ENCODE measurements at regions of chr16 and their contacts with region 1.

Region 1: DNA sequence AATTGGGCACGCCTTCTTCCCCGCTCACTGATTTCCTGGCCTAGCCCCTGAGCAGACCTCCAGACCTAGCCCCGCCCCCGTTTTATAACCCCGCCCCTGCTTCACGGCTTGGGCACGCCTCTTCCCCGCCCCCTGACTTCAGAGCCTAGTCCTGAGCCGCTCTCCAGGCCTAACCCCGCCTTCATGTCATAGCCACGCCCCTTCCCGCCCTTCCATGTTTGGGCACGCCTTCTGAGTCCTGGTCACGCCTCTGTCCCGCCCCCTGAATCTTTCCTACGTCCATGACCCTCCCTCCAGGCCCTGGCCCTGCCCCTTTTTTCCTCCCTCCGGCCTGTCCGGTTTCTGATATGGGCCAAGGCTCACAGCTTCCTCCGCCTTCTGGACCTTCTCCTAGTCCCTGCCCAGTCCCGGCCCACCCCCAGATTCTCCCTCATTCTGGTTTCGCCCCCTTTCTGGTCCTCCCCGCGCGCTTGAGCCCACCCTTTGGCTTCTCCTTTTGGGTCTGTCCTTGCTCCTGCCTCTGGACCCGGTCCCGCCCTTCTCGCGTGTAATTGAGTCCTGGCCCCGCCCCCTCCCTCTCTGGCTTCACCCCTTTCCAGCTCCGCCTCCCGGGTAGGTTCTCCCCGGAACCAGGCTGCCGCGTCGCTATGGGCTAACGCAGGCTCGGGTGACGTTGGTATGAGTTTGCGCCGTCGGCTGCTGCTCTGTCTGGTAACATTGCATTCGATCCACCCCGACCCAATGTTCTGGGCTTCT is 15.1 kb upstream of the EEF2K start:
- DNase-seq: peak; percentile 100
- H3K4me3 ChIP-seq: no peak overlapping the region
- CTCF ChIP-seq: no peak
- POLR2A ChIP-seq: peak in 1 of 2 donors; percentile 38

Region 2: GRCh38 chr16:20900299-20901067 is 1290.5 kb before region 1 on chr16 and contains the starts of genes DCUN1D3 and LYRM1:
- intact Hi-C with region 1: loop called (anchors 10 kb)
- DNase-seq: peak; percentile 96 to 99
- H3K4me3 ChIP-seq: peak within 1 kb of the TSS; percentile 55
- CTCF ChIP-seq: no peak
- POLR2A ChIP-seq: peak in 1 of 2 donors; percentile 58
- total RNA-seq, gene DCUN1D3: 18.2 to 20.8 (median 18.3) TPM
- total RNA-seq, gene LYRM1: 24.3 to 27.3 (median 25.5) TPM

Region 3: DNA sequence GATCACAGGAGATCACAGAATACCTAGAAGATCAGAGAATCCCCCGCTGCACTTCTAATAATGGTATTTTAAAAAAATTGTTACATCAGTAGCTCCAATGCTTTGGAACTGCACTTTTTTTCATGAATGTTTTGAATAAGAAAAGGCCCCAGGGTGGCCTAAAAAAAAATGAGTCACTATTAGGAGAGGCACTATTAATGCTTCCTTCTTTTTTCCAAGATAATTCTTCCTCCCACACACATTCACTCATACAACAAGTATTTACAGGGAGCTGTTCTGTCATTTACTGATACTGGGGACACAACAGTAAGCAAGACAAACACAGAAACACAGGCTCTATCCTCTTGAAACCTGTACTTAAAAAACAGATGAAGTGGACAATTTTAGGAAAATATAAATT is 189.4 kb before region 1 on chr16:
- intact Hi-C with region 1: loop called (anchors 5 kb)
- DNase-seq: no peak
- H3K4me3 ChIP-seq: no peak overlapping the region
- CTCF ChIP-seq: no peak
- POLR2A ChIP-seq: no peak

Region 4: DNA sequence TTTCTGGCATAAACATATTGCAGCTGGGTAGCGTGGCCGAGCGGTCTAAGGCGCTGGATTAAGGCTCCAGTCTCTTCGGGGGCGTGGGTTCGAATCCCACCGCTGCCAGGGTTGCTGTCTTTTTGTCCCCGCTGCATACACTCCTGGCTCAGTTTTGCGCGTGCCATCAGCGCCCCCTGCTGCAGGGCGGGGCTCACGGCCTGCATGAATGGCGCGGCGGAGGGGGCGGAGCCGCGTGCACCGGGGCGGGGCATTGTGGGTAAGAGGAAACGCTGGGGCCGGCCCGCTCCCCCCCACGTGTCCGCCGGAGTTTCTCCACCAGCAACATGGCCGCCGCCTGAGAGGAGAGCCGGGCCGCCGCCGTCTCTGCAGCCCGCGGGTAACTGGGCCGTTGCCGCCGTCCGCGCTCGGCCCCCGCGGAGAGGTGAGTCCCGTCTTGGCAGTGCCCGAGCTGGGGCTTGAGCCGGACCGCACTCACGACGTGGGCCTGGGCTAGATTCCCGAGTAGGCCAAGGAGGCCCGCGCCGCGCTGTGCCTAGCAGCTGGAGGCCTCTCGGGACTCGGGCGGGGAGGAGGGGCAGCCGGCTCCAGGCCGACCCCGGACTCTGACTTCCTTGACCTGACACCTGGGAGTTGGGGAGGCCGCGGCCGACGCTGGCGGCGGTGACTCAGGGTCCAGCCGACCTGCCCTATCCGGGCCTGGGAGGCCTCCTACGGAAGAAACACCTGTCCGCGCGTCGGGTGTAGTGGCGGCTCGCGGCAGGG is 106.3 kb after region 1 on chr16 and contains the start of gene POLR3E:
- intact Hi-C with region 1: loop called (anchors 2 kb)
- DNase-seq: peak; percentile 99 to 100
- H3K4me3 ChIP-seq: peak within 1 kb of the TSS; percentile 68
- CTCF ChIP-seq: peak in 1 of 3 donors; percentile 98
- POLR2A ChIP-seq: no peak
- total RNA-seq, gene POLR3E: 64.7 to 74.0 (median 71.4) TPM

Region 5: DNA sequence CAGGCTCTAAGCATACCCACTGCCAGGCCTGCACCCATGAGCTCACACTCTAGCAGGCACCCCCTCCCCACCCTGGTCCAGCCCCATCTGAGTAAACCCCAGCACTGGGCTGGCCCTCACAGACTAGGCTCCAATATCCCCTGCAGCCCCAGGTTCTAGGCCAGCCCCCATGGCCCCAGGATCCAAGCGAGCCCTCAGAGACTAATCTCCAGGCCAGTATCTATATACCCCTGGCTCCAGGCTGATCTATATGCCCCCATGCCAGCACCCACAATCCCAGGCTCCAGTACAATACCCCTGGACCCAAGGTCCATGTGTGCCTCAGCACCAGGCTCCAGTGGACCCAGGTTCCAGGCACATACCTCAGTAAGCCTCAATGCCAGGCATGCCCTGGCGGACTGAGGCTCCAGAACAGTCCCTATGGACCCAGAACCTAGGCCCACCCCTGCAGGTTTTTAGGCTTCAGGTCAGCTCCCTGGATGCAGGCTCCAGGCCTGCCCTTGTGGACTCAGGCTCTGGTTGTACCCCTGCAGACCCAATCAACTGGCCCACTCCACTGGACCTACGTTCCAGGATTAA is 144.8 kb after region 1 on chr16:
- intact Hi-C with region 1: no loop called
- DNase-seq: no peak
- H3K4me3 ChIP-seq: no peak overlapping the region
- CTCF ChIP-seq: no peak
- POLR2A ChIP-seq: no peak

Measured in lower leg skin (tissue), 4 donors.